Vagina (tissue), 2 donors: ENCODE measurements at regions of chr2 and their contacts with region 1.

Region 1: DNA sequence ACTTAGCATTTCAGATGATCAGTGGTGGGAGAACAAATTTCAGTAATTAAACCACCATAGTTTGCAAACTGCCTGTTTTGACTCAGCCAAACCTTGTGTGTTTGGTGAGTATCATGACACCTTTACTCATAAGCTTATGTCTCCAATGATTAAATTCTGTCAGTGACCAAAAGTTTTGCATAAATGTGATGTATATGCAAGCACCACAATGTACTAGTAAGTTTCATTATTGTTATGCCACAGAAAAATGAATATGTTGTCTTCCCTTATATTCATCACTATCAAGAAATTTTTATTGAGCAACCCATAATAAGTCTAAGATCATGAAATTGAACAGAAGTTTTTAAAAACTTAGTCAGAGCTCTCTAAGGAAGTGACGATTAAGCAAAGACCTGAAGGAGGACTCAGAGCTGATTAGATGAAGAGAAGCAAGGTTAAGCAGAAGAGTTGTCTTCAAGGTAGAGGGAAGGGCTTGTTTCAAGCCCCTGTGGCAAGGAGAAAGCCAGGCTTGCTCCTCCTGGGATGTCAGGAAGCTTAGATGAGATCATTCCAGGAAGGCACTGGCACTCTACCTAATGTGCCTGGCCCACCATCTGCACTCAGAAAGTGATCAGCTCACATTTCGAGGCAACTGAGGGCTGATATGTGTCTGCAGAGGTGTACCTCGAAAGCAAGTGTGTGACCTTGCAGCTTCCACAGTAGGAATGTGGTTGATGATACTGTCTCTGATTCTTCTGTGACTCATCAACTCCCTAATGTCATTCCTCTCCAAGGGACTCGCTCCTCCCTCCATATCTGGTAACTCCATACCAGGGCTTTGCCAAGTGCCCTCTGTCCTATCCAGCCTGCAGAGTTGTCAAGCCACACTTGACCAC is 54.7 kb downstream of the KCTD18 start:
- DNase-seq: no peak
- H3K4me3 ChIP-seq: no peak overlapping the region
- H3K27ac ChIP-seq: no peak overlapping the region
- H3K4me1 ChIP-seq: peaks cover 19% of the 10 kb centered on the region
- H3K27me3 ChIP-seq: no peaks in the 10 kb centered on the region
- CTCF ChIP-seq: no peak
- POLR2A ChIP-seq: no peak

Region 2: DNA sequence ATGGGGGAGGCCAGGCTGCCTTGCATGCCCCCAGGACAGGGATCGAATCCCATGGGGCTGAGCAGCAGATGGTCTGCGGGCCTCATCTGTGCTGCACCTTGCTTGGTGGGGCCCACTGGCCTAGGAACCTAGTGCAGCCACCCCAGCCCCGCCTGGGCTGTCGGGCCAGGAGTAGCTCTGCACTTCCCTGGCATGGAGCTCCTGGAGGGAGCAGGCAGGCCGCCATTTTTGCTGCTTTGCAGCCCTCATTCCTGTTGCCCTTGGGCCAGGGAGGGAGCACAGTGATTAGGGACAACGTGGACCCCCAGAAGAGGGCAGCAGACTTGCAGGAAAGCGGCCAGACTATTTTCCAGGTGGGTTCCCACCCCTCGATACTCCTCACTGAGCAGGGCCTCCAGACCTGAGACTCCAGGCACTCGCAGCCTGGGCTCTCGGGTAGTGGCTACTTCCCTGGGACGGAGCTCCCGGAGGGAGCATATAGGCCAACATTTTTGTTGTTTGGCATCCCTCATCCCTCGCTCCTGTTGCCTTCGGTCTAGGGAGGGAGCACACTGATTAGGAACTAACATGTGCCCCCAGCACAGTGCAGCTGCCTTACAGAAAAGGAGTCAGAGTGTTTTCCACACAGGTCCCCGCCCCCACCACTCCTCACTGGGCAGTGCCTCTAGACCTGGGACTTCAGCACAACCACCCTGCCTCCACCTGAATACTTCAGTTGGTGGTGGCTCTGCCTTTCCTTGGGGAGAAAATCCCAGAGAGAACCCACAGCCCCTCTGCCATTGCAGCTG is 400.3 kb before region 1 on chr2:
- intact Hi-C with region 1: no loop called
- DNase-seq: no peak
- H3K4me3 ChIP-seq: no peak overlapping the region
- H3K27ac ChIP-seq: no peak overlapping the region
- H3K4me1 ChIP-seq: no peaks in the 10 kb centered on the region
- H3K27me3 ChIP-seq: no peaks in the 10 kb centered on the region
- CTCF ChIP-seq: no peak
- POLR2A ChIP-seq: no peak

Region 3: DNA sequence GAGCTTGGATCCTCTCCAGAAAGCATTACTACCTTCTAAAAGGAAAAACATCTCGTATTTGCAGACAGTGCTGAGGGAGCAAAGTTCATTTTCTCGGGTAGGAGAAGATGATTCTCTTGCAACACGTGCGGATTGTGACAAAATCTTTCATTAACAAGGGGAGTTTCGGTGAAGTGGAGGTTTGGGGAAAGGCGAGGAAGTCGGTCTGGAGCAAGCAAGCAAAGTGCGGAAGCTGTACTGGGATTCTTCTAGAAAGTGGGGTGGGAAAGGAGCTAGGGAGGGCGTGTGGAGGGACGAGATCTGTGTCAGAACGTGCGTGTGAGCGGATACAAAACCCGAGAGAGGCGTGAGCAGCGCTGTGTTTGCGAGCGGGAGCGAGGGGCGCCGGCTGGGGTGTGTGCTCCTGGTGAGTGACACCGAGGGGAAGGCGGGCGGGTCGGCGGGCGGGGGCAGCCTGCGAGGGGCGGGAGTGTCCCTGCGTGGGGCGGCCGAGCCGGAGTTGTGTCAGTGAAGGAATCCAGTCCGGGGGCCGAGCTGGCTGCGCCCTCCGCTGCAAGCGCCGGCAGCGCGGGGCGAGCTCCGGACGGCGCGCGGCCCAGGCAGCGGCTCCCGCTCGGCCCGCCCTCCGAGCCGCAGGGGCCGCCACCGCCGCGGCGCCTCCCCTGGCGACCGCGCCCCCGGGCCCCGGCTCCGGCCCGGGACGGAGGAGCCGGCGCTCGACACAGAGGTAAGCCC is 148.8 kb before region 1 on chr2 and contains the start of gene SPATS2L:
- intact Hi-C with region 1: loop called (anchors 10 kb)
- DNase-seq: peak in 1 of 2 donors; percentile 95
- H3K4me3 ChIP-seq: peak within 1 kb of the TSS; percentile 74 to 85
- H3K27ac ChIP-seq: peak within 1 kb of the TSS; percentile 98
- H3K4me1 ChIP-seq: peaks cover 40% of the 10 kb centered on the region
- H3K27me3 ChIP-seq: no peaks in the 10 kb centered on the region
- CTCF ChIP-seq: no peak
- POLR2A ChIP-seq: peak in 1 of 2 donors; percentile 49
- total RNA-seq, gene SPATS2L: 65.6 TPM

Region 4: DNA sequence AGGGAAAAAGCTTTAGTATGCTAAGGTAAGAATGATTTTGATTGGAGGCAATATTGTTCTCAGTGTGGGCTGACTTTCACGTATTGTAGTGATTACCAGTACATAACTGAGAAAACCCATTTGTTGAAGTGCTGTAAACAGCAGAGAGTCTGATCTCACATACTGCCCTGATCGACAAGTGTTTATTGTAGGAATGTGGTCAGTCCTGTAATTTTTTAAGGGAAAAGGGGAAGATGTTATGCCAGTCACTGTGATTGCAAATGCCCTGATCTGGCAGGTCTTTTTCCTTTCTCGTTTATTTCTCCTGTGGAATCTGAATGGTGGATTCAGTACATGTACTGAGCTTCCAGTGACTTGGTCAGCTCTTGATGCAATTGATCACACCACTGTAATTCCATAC is 137.2 kb before region 1 on chr2:
- intact Hi-C with region 1: no loop called
- DNase-seq: no peak
- H3K4me3 ChIP-seq: no peak overlapping the region
- H3K27ac ChIP-seq: no peak overlapping the region
- H3K4me1 ChIP-seq: peaks cover 97% of the 10 kb centered on the region
- H3K27me3 ChIP-seq: no peaks in the 10 kb centered on the region
- CTCF ChIP-seq: no peak
- POLR2A ChIP-seq: no peak

Region 5: DNA sequence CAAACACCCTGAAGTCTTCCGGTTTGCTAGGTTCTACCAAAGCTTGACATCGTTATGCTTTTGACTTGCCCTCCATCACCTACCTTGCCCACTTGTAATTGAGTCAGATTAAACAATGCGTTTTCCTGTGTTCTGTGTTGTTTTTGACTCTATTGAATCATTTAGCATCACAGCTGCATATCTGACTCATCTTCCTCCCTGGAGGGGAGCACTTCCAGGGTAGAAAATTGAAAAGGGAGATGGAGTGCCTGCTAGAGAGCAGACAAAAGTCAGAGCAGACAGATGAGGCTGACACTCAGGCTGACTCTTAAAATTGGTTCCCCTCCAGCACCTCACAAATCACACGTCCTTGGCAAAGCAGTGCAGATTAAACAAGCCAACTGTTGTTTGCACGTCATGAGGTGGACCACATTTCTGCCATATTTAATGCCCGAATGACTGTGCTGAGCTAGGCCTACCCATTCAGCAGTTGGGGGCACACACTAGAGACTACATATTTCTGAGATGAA is 1241.0 kb after region 1 on chr2:
- intact Hi-C with region 1: no loop called
- DNase-seq: no peak
- H3K4me3 ChIP-seq: no peak overlapping the region
- H3K27ac ChIP-seq: peak overlapping the region; percentile 54
- H3K4me1 ChIP-seq: peaks cover 24% of the 10 kb centered on the region
- H3K27me3 ChIP-seq: no peaks in the 10 kb centered on the region
- CTCF ChIP-seq: no peak
- POLR2A ChIP-seq: no peak